Endothelial cell of umbilical vein (primary cell): ENCODE measurements at regions of chr17 and their contacts with region 1.

Region 1: DNA sequence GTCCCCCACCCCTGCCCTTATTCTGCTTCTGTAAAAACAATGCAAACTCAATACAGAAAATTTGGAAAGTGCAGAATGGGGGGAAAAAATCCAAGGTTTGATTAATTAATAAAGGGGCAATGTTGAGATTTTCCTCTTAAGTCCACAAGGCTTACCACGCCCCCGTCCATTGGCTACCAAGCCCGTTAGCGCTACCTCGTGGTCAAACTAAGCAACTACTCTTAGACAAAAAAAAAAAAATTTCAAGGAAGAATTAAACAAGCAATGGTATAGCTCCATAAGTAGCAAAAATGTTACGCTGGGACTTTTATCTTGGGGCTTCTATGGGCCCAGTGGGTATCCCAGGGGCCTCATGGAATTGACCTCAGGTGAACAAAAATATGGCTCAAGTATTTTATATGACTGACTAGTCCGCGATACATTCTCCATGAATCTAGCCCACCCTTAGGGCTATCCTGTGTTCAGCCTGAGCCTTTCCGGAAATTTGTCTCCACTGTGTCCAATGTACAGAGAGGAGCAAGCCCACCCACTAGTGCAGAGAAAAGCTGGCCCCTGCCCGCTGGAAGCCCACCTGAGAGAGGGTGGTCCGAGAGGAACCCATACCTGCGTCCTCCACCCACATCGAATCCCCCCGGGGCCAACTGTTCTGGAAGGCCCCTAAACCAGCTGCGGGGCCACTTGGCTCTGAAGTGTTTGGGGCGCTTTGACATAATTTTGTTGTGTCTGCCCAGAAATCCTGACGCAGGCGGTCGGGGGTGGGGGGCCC is 19.1 kb upstream of the TEX2 start:
- DNase-seq: peak; percentile 87
- H3K4me3 ChIP-seq: no peak overlapping the region
- H3K27ac ChIP-seq: no peak overlapping the region
- H3K4me1 ChIP-seq: peaks cover 17% of the 10 kb centered on the region
- H3K27me3 ChIP-seq: no peaks in the 10 kb centered on the region
- CTCF ChIP-seq: peak; percentile 58 to 61
- POLR2A ChIP-seq: no peak

Region 2: GRCh38 chr17:63911657-63912426 is 370.3 kb before region 1 on chr17:
- CTCF ChIA-PET with region 1: interaction called, 3 read pairs
- POLR2A ChIA-PET with region 1: no interaction called
- dilution Hi-C with region 1: no loop called
- intact Hi-C with region 1: loop called (anchors 2 kb)
- DNase-seq: peak; percentile 26
- H3K4me3 ChIP-seq: no peak overlapping the region
- H3K27ac ChIP-seq: no peak overlapping the region
- H3K4me1 ChIP-seq: no peaks in the 10 kb centered on the region
- H3K27me3 ChIP-seq: peaks cover 6 to 8% of the 10 kb centered on the region in 2 experiments
- CTCF ChIP-seq: peak; percentile 34 to 70
- POLR2A ChIP-seq: no peak

Region 3: GRCh38 chr17:64145757-64146417 is 136.3 kb before region 1 on chr17:
- CTCF ChIA-PET with region 1: interaction called, 36 read pairs
- POLR2A ChIA-PET with region 1: interaction called, 9 read pairs
- dilution Hi-C with region 1: no loop called
- intact Hi-C with region 1: loop called (anchors 1 kb)
- DNase-seq: peak; percentile 99
- H3K4me3 ChIP-seq: peak overlapping the region; percentile 31 to 72 (median 64)
- H3K27ac ChIP-seq: peak overlapping the region; percentile 63
- H3K4me1 ChIP-seq: peaks cover 21% of the 10 kb centered on the region
- H3K27me3 ChIP-seq: no peaks in the 10 kb centered on the region
- CTCF ChIP-seq: no peak
- POLR2A ChIP-seq: peak; percentile 100

Region 4: DNA sequence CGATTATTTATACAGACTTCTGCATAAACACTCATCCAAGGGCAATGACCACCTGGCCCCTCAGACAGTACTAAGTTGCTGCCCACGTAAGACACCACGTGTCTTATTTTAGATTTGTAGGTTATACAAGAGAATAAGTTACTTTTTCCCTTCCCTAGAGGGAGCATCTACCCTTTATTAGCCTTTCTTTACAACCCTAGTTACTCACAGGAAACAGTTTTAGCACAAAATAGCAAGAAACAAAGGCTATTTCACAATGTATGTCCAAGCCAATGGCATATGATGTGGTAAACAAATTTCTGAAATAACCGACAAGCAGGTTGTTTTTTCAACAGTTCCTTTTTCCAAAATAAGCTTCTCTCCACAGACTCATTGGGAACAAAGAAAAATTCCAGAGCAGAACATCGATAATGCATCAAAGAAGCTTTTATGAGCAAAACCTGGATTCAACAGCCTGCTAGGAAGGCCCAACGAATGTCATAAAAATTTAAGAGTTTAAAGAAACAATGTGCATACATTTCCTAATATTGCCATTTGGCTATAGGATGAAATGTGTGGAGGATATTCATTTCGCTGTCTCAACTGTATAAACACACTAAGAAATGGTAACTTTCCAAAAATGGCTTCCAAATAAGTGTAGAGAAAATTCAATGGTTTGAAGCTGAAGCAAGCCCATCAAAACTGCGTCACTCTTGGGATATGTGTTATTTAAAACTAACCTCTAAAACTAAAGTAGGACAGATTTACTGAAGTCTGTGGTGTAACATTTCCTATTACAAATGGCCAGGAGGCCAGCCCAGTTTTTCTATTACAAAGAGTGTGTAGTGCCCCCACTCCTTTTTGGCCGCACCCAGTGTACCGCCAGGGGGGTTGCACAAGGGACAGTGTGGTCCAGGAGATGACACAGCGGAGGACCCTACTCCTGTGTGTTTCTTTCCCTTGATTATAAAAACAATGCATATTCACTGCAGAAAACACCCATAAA is 101.8 kb before region 1 on chr17:
- CTCF ChIA-PET with region 1: interaction called, 5 read pairs
- POLR2A ChIA-PET with region 1: no interaction called
- dilution Hi-C with region 1: no loop called
- intact Hi-C with region 1: loop called (anchors 1 kb)
- DNase-seq: peak; percentile 88
- H3K4me3 ChIP-seq: no peak overlapping the region
- H3K27ac ChIP-seq: peak overlapping the region; percentile 15
- H3K4me1 ChIP-seq: peaks cover 12% of the 10 kb centered on the region
- H3K27me3 ChIP-seq: no peaks in the 10 kb centered on the region
- CTCF ChIP-seq: no peak
- POLR2A ChIP-seq: no peak

Region 5: DNA sequence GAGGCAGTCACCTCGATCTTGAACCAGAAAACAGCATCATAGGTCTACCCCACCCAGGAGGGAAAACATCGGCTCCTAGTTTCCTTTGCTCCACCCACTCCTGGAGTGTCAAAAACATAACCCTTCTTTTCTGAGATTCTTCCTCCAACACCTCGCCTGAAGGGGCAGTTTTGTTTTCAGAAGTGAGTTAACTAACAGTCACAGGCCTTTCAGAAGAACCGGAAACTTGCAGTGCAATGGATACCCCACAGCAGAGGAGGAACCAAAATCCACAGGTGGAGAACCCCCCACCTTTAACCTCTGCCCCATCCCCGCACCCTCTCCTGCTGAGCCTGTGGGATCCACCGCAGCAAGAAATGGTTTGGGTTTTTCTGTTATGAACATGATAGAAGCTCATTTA is 11.3 kb before region 1 on chr17:
- CTCF ChIA-PET with region 1: interaction called, 11 read pairs
- POLR2A ChIA-PET with region 1: no interaction called
- dilution Hi-C with region 1: no loop called
- intact Hi-C with region 1: no loop called
- DNase-seq: no peak
- H3K4me3 ChIP-seq: no peak overlapping the region
- H3K27ac ChIP-seq: no peak overlapping the region
- H3K4me1 ChIP-seq: no peaks in the 10 kb centered on the region
- H3K27me3 ChIP-seq: peaks cover 5 to 11% of the 10 kb centered on the region in 2 experiments
- CTCF ChIP-seq: no peak
- POLR2A ChIP-seq: no peak